CD4-positive, alpha-beta T cell (primary cell): ENCODE measurements at regions of chr1 and their contacts with region 1.

Region 1: DNA sequence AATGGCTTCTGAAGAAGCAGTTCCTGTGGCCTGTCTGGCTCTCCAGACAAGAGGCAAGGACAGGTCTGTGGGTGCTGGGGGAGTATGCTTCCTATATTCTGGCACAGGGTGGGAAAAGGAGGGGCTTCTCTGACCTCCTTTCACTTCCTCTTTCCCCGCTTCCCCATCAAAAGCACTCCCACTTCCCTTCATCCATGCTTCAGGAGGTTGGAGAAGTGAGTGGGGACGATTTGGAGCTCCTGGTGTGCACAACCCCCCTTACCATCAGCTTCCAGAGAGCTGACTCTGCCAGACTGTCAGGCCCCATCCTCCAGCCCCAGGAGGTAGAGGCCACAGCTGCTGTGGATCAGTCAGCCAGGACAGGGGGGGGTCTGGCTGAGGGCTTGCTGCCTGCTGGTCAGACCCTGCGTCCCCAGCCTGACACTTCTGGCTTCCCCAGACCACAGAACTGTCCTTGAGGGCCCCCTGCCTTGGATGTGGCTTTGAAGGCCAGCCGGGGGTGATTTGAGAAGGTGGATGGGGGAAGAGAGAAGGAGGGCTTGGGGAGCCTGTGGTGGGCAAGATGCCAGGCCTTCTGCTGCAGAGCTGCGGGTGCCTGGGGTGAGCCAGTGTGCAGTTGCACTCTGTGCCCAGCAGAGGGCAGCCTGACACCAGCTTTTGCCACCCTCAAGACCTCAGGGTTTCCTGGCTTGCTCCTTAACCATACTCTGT is 21.5 kb upstream of the TMEM222 start:
- DNase-seq: peak; percentile 61 to 91 (median 74)
- ATAC-seq: peak; percentile 96
- H3K4me3 ChIP-seq: no peak overlapping the region
- H3K4me3 Mint-ChIP-seq: no peak overlapping the region
- H3K27ac ChIP-seq: no peak overlapping the region
- H3K27ac Mint-ChIP-seq: no peak overlapping the region
- H3K4me1 ChIP-seq: peaks cover 8% of the 10 kb centered on the region
- H3K4me1 Mint-ChIP-seq: peaks cover 5% of the 10 kb centered on the region
- H3K27me3 ChIP-seq: no peaks in the 10 kb centered on the region
- H3K27me3 Mint-ChIP-seq: no peaks in the 10 kb centered on the region
- CTCF ChIP-seq: peak; percentile 96

Region 2: DNA sequence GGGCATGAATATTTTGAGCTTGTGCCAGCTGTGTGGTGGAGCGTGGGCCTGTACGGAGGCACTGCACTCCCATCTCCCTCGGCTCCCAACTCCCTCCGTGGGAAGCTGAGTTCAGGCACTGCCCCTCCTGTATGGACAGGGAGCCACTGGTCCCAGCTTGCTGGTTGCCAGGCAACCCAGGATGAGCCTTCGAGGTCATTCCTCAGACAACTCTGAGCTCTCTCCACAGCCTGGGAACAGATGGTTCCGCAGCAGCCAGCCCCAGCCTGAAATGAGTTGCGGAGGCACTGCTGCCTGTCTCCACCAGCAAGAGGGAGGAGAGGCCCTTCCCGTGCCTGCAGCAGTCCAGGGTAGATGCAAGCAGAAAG is 229.5 kb before region 1 on chr1:
- CTCF ChIA-PET with region 1: no interaction called
- POLR2A ChIA-PET with region 1: no interaction called
- intact Hi-C with region 1: no loop called
- DNase-seq: no peak
- ATAC-seq: no peak
- H3K4me3 ChIP-seq: no peak overlapping the region
- H3K4me3 Mint-ChIP-seq: no peak overlapping the region
- H3K27ac ChIP-seq: no peak overlapping the region
- H3K27ac Mint-ChIP-seq: no peak overlapping the region
- H3K4me1 ChIP-seq: no peaks in the 10 kb centered on the region
- H3K4me1 Mint-ChIP-seq: no peaks in the 10 kb centered on the region
- H3K27me3 ChIP-seq: peaks cover 0 to 2% of the 10 kb centered on the region in 2 experiments
- H3K27me3 Mint-ChIP-seq: no peaks in the 10 kb centered on the region
- CTCF ChIP-seq: no peak

Region 3: GRCh38 chr1:27314169-27314568 is 13.7 kb after region 1 on chr1:
- CTCF ChIA-PET with region 1: interaction called, 13 read pairs
- POLR2A ChIA-PET with region 1: interaction called, 3 read pairs
- intact Hi-C with region 1: no loop called
- DNase-seq: no peak
- ATAC-seq: no peak
- H3K4me3 ChIP-seq: no peak overlapping the region
- H3K4me3 Mint-ChIP-seq: no peak overlapping the region
- H3K27ac ChIP-seq: no peak overlapping the region
- H3K27ac Mint-ChIP-seq: no peak overlapping the region
- H3K4me1 ChIP-seq: no peaks in the 10 kb centered on the region
- H3K4me1 Mint-ChIP-seq: no peaks in the 10 kb centered on the region
- H3K27me3 ChIP-seq: no peaks in the 10 kb centered on the region
- H3K27me3 Mint-ChIP-seq: no peaks in the 10 kb centered on the region
- CTCF ChIP-seq: no peak

Region 4: GRCh38 chr1:27365372-27366112 is 65.0 kb after region 1 on chr1:
- CTCF ChIA-PET with region 1: interaction called, 10 read pairs
- POLR2A ChIA-PET with region 1: no interaction called
- intact Hi-C with region 1: no loop called
- DNase-seq: peak; percentile 62 to 89 (median 78)
- ATAC-seq: peak; percentile 72
- H3K4me3 ChIP-seq: peak overlapping the region; percentile 70
- H3K4me3 Mint-ChIP-seq: peak overlapping the region; percentile 88
- H3K27ac ChIP-seq: no peak overlapping the region
- H3K27ac Mint-ChIP-seq: peak overlapping the region; percentile 43
- H3K4me1 ChIP-seq: peaks cover 49% of the 10 kb centered on the region
- H3K4me1 Mint-ChIP-seq: peaks cover 49% of the 10 kb centered on the region
- H3K27me3 ChIP-seq: no peaks in the 10 kb centered on the region
- H3K27me3 Mint-ChIP-seq: no peaks in the 10 kb centered on the region
- CTCF ChIP-seq: no peak